Mammary epithelial cell (primary cell): ENCODE measurements at regions of chr7 and their contacts with region 1.

Region 1: DNA sequence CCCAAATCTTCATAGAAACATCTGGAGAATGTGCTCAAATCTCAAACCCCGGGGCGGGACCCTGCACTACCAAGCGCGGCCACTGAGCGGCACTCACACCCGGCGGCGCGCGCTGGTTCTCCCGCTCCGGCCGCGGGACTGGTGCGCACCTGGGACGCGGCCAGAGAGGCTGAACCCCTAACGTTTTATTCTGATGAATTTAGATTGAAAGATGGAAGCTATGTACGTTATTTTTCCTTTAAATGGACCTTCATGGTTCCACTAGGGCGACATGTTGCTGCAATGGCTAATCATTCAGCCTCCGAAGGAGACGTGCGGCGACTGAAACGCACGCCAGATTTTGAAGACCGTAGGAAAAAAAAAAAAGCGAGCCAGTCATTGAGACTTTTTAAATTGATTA is 107.0 kb upstream of the INSIG1 start:
- DNase-seq: no peak
- H3K4me3 ChIP-seq: peak overlapping the region in 1 of 3 experiments; percentile 0
- H3K27ac ChIP-seq: no peak overlapping the region
- H3K4me1 ChIP-seq: no peaks in the 10 kb centered on the region
- H3K27me3 ChIP-seq: no peaks in the 10 kb centered on the region
- CTCF ChIP-seq: peak; percentile 81 to 94

Region 2: DNA sequence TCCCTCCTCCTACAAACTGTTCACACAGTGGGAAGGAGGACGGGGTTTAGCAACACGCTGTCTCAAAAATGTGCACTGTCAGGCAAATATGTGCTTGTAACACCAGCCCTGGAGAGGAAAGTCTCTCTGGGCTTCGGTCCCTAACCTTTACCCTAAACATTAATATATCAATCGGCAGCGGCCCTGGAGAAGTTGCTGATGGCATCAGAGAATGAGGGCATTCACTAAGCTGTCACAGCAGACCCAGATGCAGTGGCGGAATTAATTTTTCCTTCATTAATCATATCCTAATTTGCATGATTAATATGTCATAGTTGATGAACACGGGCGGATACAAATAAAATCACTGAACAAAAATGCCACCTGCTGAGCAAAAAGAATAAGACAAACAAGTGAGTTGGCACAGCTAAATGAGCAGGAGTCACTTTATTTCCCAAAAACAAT is 61.8 kb after region 1 on chr7:
- CTCF ChIA-PET with region 1: no interaction called
- dilution Hi-C with region 1: no loop called
- in situ Hi-C with region 1: no loop called
- intact Hi-C with region 1: loop called (anchors 1 kb)
- DNase-seq: no peak
- H3K4me3 ChIP-seq: no peak overlapping the region
- H3K27ac ChIP-seq: no peak overlapping the region
- H3K4me1 ChIP-seq: peaks cover 3% of the 10 kb centered on the region
- H3K27me3 ChIP-seq: peaks cover 3% of the 10 kb centered on the region
- CTCF ChIP-seq: no peak

Region 3: DNA sequence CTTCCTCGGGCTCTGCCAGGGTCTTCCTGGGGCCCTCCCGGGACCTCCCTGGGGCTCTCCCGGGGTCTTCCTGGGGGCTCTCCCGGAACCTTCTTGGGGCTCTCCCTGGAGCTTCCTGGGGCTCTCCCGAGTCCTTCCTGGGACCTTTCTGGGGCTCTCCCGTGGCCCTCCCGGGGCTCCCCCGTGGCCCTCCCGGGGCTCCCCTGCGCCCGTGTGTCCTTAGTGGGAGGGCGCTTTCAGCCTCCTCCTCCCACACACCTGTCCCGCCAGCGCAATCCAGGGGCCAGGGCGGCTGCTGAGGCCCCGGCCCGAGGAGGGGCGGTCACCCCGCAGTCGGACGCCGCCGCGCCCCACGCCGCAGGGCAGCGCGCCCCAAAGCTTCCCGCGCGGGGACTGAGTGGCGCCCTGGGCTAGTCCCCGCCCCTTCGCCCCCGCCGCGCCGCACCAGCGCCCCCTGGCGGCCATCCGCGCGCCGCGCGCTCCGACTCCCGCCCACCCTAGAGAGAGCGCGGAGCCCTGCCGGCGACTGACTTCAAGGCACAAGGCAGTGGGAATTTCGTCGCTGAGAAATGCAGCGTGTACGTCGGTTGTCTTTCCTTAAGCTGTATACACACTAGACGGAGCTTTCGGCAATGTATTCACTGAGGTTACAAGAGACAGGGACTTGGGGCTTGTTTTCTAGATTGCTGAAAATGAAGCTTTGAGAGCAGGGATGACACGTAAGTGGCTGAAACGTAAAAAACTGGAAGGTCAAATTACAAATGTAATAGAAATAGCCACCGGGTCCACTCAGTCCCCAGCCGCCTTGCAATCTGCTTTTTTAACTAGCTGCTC is 154.1 kb after region 1 on chr7:
- CTCF ChIA-PET with region 1: no interaction called
- dilution Hi-C with region 1: loop called (anchors 5 kb)
- in situ Hi-C with region 1: loop called in 1 of 2 experiments (anchors 5 kb)
- intact Hi-C with region 1: loop called (anchors 1 kb)
- DNase-seq: peak; percentile 41
- H3K4me3 ChIP-seq: peak overlapping the region in 2 of 3 experiments; percentile 36 to 54
- H3K27ac ChIP-seq: no peak overlapping the region
- H3K4me1 ChIP-seq: no peaks in the 10 kb centered on the region
- H3K27me3 ChIP-seq: no peaks in the 10 kb centered on the region
- CTCF ChIP-seq: peak; percentile 56 to 70

Region 4: GRCh38 chr7:155497149-155497901 is 306.6 kb after region 1 on chr7:
- CTCF ChIA-PET with region 1: no interaction called
- dilution Hi-C with region 1: no loop called
- in situ Hi-C with region 1: no loop called
- intact Hi-C with region 1: no loop called
- DNase-seq: no peak
- H3K4me3 ChIP-seq: no peak overlapping the region
- H3K27ac ChIP-seq: no peak overlapping the region
- H3K4me1 ChIP-seq: no peaks in the 10 kb centered on the region
- H3K27me3 ChIP-seq: peaks cover 8% of the 10 kb centered on the region
- CTCF ChIP-seq: no peak